Activated CD8-positive, alpha-beta T cell treated with anti-CD3 and anti-CD28 coated beads, Interleukin-2, amount 10 ng/mL, durations not matched to agents 7 days and 5 days (primary cell): ENCODE measurements at regions of chr5 and their contacts with region 1.

Region 1: GRCh38 chr5:139422307-139422893 is 16.9 kb downstream of the DNAJC18 start:
- DNase-seq: peak; percentile 82
- ATAC-seq: peak; percentile 84
- H3K4me3 Mint-ChIP-seq: no peak overlapping the region
- H3K27ac Mint-ChIP-seq: no peak overlapping the region
- H3K4me1 Mint-ChIP-seq: peaks cover 19% of the 10 kb centered on the region
- H3K27me3 Mint-ChIP-seq: no peaks in the 10 kb centered on the region

Region 2: DNA sequence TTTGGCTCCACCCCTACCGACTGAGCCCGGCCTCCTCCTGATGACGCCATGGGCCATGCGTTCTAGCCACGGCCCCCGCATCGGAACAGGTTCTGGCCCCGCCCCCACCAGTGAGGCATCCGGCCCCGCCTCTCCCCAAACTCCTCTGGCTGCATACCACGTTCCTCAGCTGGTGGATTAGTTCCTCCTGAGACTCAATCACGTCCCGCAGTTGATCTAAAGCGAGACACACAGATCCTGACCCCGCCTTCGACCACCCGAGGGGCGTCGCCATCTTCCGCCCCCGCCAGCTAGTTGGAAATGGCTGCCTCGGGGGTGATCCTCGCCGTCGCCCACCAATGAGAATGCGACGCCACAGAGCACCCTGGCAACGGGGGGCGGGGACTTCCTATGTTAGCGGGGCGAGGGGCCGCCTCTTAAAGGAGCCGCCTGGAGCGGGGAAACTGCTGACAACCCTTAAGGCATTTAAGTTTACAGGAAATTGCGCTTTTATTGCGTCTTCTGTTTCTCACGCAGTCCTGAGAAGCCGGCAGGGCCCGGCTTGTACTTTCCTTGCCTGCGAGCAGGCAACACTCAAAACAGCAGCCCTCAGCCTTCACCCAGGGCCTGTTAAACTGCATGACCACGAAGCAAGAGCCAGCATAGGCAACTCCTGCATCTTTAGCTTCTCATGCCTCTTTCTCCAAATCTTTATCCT is 18.5 kb before region 1 on chr5 and contains the start of gene SPATA24:
- CTCF ChIA-PET with region 1: interaction called, 23 read pairs
- POLR2A ChIA-PET with region 1: no interaction called
- DNase-seq: peak; percentile 99
- ATAC-seq: peak; percentile 93
- H3K4me3 Mint-ChIP-seq: peak within 1 kb of the TSS; percentile 94
- H3K27ac Mint-ChIP-seq: peak within 1 kb of the TSS; percentile 100
- H3K4me1 Mint-ChIP-seq: peaks cover 40% of the 10 kb centered on the region
- H3K27me3 Mint-ChIP-seq: no peaks in the 10 kb centered on the region
- total RNA-seq, gene SPATA24: 3.8 to 4.0 TPM

Region 3: GRCh38 chr5:139458580-139459406 is 36.4 kb after region 1 on chr5:
- CTCF ChIA-PET with region 1: interaction called, 16 read pairs
- POLR2A ChIA-PET with region 1: interaction called, 6 read pairs
- DNase-seq: peak; percentile 92
- ATAC-seq: peak; percentile 92
- H3K4me3 Mint-ChIP-seq: peak overlapping the region; percentile 67
- H3K27ac Mint-ChIP-seq: peak overlapping the region; percentile 97
- H3K4me1 Mint-ChIP-seq: peaks cover 63% of the 10 kb centered on the region
- H3K27me3 Mint-ChIP-seq: peaks cover 14% of the 10 kb centered on the region

Region 4: DNA sequence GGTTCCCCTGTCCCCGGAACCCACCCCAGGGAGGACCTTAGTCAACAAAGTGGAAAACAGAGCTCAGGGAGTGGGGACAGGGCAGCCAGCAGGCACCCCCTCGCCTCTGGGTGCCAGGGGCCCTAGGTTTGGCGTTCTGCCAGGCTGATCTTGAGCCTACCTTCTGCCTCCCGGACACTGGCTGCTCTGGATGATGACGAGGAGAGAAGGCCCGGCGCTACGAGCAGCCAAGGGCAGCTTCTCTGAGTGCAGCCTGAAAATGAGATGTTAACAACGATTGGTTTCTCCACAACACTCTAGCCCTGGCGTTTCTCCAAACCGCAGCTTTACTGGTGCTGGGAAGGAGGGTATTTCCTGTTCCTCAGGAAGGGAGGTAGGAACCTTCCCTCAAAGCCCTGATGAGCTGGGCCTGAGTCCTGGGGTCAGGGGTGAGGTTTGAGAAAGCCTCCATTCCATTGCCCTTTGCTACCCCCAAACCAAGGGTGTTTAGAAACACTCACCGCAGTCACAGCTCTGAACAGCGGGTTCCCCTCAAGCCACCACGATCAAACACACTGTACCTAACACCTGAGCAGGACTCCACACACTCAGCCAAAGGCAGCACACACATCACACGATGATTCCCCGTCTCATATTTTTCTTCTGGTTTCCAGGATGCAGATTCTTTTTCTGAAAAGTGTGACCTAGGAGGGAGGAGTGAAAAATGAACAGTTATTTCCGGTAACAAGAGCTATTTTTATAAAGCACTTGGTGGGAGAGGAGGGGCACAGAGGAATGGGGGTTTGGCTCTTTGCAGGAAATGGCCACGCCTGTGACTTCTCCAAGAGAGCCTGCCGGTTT is 59.9 kb after region 1 on chr5 and contains the start of gene STING1:
- CTCF ChIA-PET with region 1: interaction called, 30 read pairs
- POLR2A ChIA-PET with region 1: interaction called, 6 read pairs
- DNase-seq: peak; percentile 76
- ATAC-seq: peak; percentile 90
- H3K4me3 Mint-ChIP-seq: peak within 1 kb of the TSS; percentile 79
- H3K27ac Mint-ChIP-seq: peak within 1 kb of the TSS; percentile 94
- H3K4me1 Mint-ChIP-seq: peaks cover 38% of the 10 kb centered on the region
- H3K27me3 Mint-ChIP-seq: no peaks in the 10 kb centered on the region
- total RNA-seq, gene STING1: 64.9 to 67.4 TPM

Region 5: DNA sequence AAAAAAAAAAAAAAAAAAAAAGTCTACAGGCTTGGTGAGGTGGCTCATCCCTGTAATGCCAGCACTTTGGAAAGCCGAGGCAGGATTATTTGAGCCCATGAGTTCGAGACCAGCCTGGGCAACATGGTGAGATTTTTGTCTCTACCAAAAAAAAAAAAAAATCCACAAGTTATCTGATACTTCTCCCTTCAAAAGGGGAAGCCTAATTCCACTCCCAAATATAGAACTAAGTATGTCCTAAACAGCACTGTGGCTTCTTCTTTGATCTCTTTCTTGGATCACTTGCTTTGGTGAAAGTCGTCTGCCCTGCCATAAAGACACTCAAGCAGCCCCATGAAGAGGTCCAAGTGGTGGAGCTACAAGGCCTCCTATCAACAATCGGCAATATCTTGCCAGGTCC is 79.0 kb after region 1 on chr5:
- CTCF ChIA-PET with region 1: interaction called, 12 read pairs
- POLR2A ChIA-PET with region 1: no interaction called
- DNase-seq: no peak
- ATAC-seq: no peak
- H3K4me3 Mint-ChIP-seq: no peak overlapping the region
- H3K27ac Mint-ChIP-seq: no peak overlapping the region
- H3K4me1 Mint-ChIP-seq: no peaks in the 10 kb centered on the region
- H3K27me3 Mint-ChIP-seq: peaks cover 19% of the 10 kb centered on the region

Region 6: GRCh38 chr5:139560752-139561654 is 138.6 kb after region 1 on chr5 and contains the start of gene UBE2D2:
- CTCF ChIA-PET with region 1: interaction called, 12 read pairs
- POLR2A ChIA-PET with region 1: interaction called, 4 read pairs
- DNase-seq: peak; percentile 98
- ATAC-seq: peak; percentile 90
- H3K4me3 Mint-ChIP-seq: peak within 1 kb of the TSS; percentile 91
- H3K27ac Mint-ChIP-seq: peak within 1 kb of the TSS; percentile 91
- H3K4me1 Mint-ChIP-seq: peaks cover 36% of the 10 kb centered on the region
- H3K27me3 Mint-ChIP-seq: no peaks in the 10 kb centered on the region
- total RNA-seq, gene UBE2D2: 227 to 232 TPM